PC-3 (cell line): ENCODE measurements at regions of chr20 and their contacts with region 1.

Region 1: DNA sequence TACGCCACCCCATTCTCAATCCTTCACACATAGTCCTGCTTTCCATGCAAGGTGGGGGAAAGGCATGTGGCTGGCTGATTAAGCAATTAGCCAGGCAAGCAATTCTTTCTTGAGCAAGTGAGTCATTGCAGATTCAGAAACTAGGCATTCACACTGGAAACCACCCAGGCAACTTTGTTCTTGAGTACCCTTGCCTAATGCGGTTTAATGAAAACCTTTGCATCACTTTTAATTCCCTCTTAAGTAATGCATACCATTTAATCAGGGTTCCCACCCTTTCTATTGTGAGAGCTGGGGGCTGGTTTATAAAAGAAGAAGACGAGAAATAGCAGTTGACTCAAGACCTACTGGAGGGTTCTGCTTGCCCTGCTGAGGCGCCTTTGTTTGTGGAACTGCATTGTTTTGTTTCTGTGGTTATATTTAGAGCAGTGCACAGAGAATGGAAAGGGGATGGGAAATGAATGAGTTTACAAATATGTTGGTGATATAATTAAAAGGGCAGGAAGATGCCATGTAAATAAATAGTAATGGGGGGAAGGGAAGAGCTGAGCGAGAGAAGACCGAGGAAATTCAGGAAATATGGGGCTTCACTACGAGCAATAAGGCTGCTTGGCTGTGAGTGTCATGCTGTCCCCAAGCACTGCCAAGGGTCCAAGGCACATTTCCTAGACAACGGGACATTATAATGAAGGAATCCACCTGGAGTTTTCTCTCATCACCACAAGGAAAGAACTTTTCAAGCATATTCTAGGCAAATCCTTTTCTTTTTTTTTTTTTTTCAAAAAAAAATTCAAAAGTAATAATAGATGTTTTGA is 48.8 kb upstream of the TSHZ2 start:
- DNase-seq: peak; percentile 53
- ATAC-seq: no peak
- H3K4me3 ChIP-seq: no peak overlapping the region
- H3K27ac ChIP-seq: no peak overlapping the region
- H3K4me1 ChIP-seq: no peaks in the 10 kb centered on the region
- H3K27me3 ChIP-seq: no peaks in the 10 kb centered on the region
- CTCF ChIP-seq: no peak

Region 2: DNA sequence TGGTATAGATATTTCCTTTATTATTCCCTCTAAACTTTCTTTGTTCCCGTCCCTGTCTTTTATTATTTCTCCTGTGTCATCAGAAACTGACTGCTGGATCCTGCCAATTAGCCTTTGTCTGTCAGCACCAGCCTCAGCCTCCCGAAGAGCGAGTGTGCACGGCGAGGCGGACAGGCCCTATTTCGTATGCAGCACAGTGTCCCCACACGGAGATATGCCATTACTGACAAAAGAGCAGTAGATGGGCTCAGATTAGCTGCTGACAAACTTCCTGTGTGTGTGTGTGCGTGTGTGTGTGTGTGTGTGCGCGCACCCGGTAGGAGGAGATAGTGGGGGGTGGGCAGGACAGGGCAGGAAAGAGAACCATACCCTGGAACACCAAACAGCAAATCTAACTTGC is 632.2 kb before region 1 on chr20:
- CTCF ChIA-PET with region 1: no interaction called
- POLR2A ChIA-PET with region 1: interaction called, 14 read pairs
- intact Hi-C with region 1: no loop called
- DNase-seq: no peak
- ATAC-seq: no peak
- H3K4me3 ChIP-seq: no peak overlapping the region
- H3K27ac ChIP-seq: no peak overlapping the region
- H3K4me1 ChIP-seq: peaks cover 12% of the 10 kb centered on the region
- H3K27me3 ChIP-seq: peaks cover 17% of the 10 kb centered on the region; the same call in 1 of the 2 replicates
- CTCF ChIP-seq: no peak

Region 3: DNA sequence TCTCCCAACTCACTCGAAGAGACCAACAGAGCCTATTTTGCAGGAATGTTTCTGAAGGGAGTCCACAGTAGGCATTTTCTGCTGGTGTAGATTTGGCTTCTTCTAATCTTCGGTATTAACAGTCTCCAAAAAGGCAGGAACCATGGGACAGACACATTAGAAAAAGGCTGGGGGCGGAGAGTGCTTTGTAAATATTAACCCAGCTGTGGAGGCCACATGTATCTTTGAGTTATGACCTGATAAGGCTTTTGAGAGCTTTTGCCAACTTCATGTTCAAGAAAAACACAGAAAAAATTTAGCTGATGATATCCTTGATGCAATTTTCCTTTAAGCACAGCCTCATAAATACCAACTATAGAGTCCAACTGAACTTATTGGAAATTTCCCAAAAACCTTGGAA is 70.6 kb before region 1 on chr20:
- CTCF ChIA-PET with region 1: no interaction called
- POLR2A ChIA-PET with region 1: no interaction called
- intact Hi-C with region 1: no loop called
- DNase-seq: no peak
- ATAC-seq: no peak
- H3K4me3 ChIP-seq: no peak overlapping the region
- H3K27ac ChIP-seq: no peak overlapping the region
- H3K4me1 ChIP-seq: no peaks in the 10 kb centered on the region
- H3K27me3 ChIP-seq: no peaks in the 10 kb centered on the region
- CTCF ChIP-seq: no peak